ENCODE measurements at regions of chrX and their contacts with region 1.

Region 1: GRCh38 chrX:143945171-143945570 is 61.3 kb downstream of the UBE2NL start:
- DNase-seq: no peak
- ATAC-seq: no peak
- H3K4me3 ChIP-seq: no peak overlapping the region
- H3K4me3 Mint-ChIP-seq: no peak overlapping the region
- H3K27ac ChIP-seq: no peak overlapping the region
- H3K27ac Mint-ChIP-seq: no peak overlapping the region
- H3K4me1 ChIP-seq: no peaks in the 10 kb centered on the region
- H3K4me1 Mint-ChIP-seq: no peaks in the 10 kb centered on the region
- H3K27me3 ChIP-seq: no peaks in the 10 kb centered on the region
- H3K27me3 Mint-ChIP-seq: no peaks in the 10 kb centered on the region

Region 2: DNA sequence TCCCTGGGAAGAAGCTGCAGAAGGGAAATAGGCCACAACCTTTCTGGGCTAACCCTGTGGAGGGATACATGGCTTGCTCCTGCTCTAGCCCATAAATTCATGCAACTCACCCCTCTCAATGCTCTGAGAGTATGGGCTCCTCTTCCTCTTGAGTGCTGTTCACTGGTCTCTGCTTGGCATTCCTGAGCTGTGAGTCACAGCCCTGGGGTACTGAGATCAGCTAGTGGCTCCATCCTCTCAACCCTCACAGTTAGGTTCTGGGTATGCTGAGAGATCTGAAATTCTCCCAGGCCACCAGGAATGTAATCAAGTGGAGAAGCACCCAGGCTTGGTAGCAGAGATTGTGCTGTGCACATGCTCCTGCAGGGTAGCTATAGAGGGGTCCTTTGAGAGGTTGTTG is 164.1 kb before region 1 on chrX:
- CTCF ChIA-PET with region 1: no interaction called
- POLR2A ChIA-PET with region 1: no interaction called
- intact Hi-C with region 1: no loop called
- DNase-seq: no peak
- ATAC-seq: no peak
- H3K4me3 ChIP-seq: no peak overlapping the region
- H3K4me3 Mint-ChIP-seq: no peak overlapping the region
- H3K27ac ChIP-seq: no peak overlapping the region
- H3K27ac Mint-ChIP-seq: no peak overlapping the region
- H3K4me1 ChIP-seq: no peaks in the 10 kb centered on the region
- H3K4me1 Mint-ChIP-seq: no peaks in the 10 kb centered on the region
- H3K27me3 ChIP-seq: no peaks in the 10 kb centered on the region
- H3K27me3 Mint-ChIP-seq: no peaks in the 10 kb centered on the region

Region 3: DNA sequence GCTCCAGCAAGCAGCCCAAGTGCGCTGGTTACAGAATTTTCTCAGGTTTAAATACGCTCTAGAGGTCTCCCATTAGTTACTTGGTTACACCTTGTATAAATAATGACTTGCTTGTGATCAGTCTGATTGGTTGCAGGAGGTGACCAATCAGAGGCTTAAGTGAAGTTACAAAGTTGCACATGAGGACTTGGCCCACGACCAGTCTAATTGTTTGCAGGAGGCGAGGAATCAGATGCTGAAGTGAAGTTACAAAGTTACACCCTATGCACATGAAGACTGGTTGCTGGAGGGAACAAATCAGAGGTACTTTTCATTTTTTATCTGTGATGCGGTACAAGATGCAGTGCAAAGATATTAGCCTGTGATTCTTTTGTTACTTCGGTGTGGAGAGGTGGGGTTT is 19.4 kb after region 1 on chrX:
- CTCF ChIA-PET with region 1: no interaction called
- POLR2A ChIA-PET with region 1: no interaction called
- intact Hi-C with region 1: loop called in 1 of 2 experiments (anchors 1 kb)
- DNase-seq: no peak
- ATAC-seq: no peak
- H3K4me3 ChIP-seq: no peak overlapping the region
- H3K4me3 Mint-ChIP-seq: no peak overlapping the region
- H3K27ac ChIP-seq: no peak overlapping the region
- H3K27ac Mint-ChIP-seq: no peak overlapping the region
- H3K4me1 ChIP-seq: no peaks in the 10 kb centered on the region
- H3K4me1 Mint-ChIP-seq: no peaks in the 10 kb centered on the region
- H3K27me3 ChIP-seq: no peaks in the 10 kb centered on the region
- H3K27me3 Mint-ChIP-seq: no peaks in the 10 kb centered on the region

Measured in naive thymus-derived CD4-positive, alpha-beta T cell (primary cell).